ENCODE measurements at regions of chr22 and their contacts with region 1.

Region 1: GRCh38 chr22:46678785-46679700 is 58.9 kb downstream of the GRAMD4 start:
- DNase-seq: no peak
- ATAC-seq: peak; percentile 17

Region 2: DNA sequence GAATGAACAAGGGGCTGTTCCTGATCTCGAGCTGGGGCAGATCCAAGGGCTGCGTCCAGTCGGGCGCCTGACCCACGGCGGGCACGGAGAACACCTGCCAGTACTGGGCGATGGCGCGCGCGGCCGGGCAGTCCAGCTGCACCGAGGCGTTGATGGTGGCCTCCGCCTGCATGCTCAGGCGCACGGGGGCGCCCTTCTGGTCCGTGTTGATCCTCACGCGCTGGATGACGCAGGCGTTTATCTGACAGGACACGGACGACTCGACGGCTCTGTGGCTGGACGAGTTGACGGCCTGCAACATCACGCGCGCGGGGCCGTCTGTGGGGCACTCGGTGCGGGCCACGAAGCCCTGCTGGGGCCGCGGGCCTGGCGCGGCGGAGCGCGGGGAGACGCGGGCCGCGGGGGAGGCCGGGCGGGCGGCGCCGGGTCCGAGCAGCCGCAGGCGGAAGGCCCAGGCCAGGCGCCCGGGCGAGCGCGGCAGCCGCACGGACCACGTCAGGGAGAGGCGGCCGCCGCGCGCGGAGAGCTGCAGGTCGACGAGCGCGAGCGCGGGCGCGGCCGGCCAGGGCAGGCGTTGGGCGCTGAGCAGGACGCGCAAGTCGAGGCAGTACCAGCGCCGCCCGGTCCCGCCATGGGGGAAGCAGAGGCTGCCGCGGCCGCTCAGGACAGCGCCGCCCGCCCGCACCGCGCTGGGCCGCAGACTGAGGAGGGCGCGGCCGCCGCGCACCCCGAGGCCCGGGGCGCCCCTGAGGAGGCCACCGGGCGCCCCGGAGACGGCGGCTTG is 416.4 kb before region 1 on chr22:
- intact Hi-C with region 1: no loop called
- DNase-seq: peak; percentile 77
- ATAC-seq: peak; percentile 77

Region 3: GRCh38 chr22:46381199-46381598 is 297.8 kb before region 1 on chr22:
- intact Hi-C with region 1: loop called (anchors 5 kb)
- DNase-seq: no peak
- ATAC-seq: no peak

Region 4: GRCh38 chr22:46941968-46942798 is 263.1 kb after region 1 on chr22:
- intact Hi-C with region 1: no loop called
- DNase-seq: no peak
- ATAC-seq: peak; percentile 72